Sigmoid colon (tissue), 7 donors: ENCODE measurements at regions of chr7 and their contacts with region 1.

Region 1: GRCh38 chr7:111089822-111090426 is 1.0 kb upstream of the LRRN3 start:
- DNase-seq: no peak
- H3K4me3 ChIP-seq: no peak overlapping the region
- H3K27ac ChIP-seq: no peak overlapping the region
- H3K4me1 ChIP-seq: peaks cover 0 to 26% (median 23%) of the 10 kb centered on the region in 4 donors
- H3K27me3 ChIP-seq: no peaks in the 10 kb centered on the region
- CTCF ChIP-seq: peak in 3 of 4 experiments; percentile 37 to 70 (median 38)
- EP300 ChIP-seq: no peak
- POLR2A ChIP-seq: no peak

Region 2: GRCh38 chr7:110448918-110449317 is 641.0 kb before region 1 on chr7:
- intact Hi-C with region 1: no loop called
- DNase-seq: no peak
- H3K4me3 ChIP-seq: no peak overlapping the region
- H3K27ac ChIP-seq: no peak overlapping the region
- H3K4me1 ChIP-seq: no peaks in the 10 kb centered on the region
- H3K27me3 ChIP-seq: no peaks in the 10 kb centered on the region
- CTCF ChIP-seq: no peak
- EP300 ChIP-seq: no peak
- POLR2A ChIP-seq: no peak

Region 3: DNA sequence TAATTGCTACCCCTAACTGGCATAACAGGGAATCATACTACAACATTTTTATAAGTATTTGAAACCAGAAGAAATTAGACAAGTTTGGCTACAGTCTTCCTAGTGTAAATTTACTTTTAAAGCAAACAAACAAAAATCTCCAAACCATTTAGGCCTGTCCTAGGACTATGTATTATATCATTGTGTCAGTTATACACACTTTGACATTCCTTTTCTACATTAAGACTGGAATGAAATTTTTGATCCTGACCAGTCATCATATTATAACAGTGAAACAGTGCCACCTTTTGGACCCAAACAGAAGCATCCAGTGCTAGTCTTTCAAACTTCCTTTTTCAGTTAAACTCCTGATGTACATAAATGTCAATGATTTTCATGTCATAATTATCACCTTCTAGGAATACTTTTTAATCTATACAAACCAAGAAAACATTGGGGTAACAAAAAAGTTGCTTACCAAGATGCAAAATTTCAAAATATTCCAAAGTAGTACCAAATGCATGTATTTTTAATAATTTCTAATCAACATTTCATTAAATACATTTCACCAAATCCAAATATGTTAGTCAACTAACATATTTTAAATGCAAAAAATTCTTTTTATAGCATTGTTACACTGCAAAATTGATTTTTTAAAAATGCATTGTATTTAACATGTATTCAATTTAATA is 396.7 kb after region 1 on chr7:
- intact Hi-C with region 1: loop called (anchors 5 kb)
- DNase-seq: no peak
- H3K4me3 ChIP-seq: no peak overlapping the region
- H3K27ac ChIP-seq: no peak overlapping the region
- H3K4me1 ChIP-seq: peaks cover 0 to 3% (median 0%) of the 10 kb centered on the region in 4 donors
- H3K27me3 ChIP-seq: no peaks in the 10 kb centered on the region
- CTCF ChIP-seq: peak; percentile 23 to 64 (median 43)
- EP300 ChIP-seq: no peak
- POLR2A ChIP-seq: no peak